ENCODE measurements at regions of chr14 and their contacts with region 1.

Region 1: GRCh38 chr14:96275177-96276112 is 19.4 kb downstream of the BDKRB1 start:
- DNase-seq: peak; percentile 51
- H3K4me3 ChIP-seq: no peak overlapping the region
- H3K27ac ChIP-seq: no peak overlapping the region
- H3K4me1 ChIP-seq: no peaks in the 10 kb centered on the region
- H3K27me3 ChIP-seq: no peaks in the 10 kb centered on the region
- CTCF ChIP-seq: peak; percentile 89 to 98
- POLR2A ChIP-seq: no peak

Region 2: DNA sequence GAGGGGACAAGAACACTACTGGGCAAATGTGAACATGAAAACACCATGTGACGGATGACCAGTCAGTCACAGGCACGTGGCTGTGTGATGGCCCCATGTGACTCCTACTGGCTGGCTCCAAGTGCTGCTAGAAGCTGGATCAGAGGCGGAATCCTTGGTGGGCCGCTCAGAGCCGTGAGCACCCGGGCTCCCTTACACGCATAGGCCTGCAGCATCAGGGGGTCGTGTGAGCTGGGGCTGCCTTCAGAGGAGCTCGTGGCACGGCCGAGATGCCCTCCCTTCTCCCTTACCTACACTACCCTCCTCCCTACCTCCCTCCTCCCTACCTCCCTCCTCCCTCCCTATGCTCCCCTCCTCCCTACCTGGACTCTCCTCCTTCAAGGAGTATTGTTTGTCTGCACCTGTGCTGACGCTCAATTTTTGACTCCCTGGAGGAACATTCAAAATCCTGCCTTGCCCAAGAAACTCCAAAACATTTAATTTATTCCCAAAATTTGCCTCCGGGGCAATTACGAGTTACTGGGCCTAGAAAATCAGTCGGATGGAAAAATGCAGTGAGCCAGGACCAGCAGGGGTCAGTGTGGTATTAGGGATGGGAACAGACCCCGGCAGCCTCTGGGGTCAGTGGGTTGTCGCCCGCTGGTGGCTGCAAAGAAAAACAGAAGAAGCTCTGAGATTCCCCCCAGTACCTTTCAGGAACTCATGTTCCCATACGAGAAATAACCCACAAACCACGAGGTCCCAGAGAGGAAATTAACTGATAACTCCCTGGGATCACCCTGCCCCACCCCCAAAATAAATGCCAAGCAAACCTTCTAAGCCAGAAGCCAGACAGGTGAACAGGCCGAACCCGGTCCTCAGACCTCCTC is 175.1 kb before region 1 on chr14:
- CTCF ChIA-PET with region 1: interaction called, 42 read pairs
- POLR2A ChIA-PET with region 1: no interaction called
- dilution Hi-C with region 1: no loop called
- intact Hi-C with region 1: loop called (anchors 1 kb)
- DNase-seq: peak; percentile 64
- H3K4me3 ChIP-seq: no peak overlapping the region
- H3K27ac ChIP-seq: no peak overlapping the region
- H3K4me1 ChIP-seq: no peaks in the 10 kb centered on the region
- H3K27me3 ChIP-seq: no peaks in the 10 kb centered on the region
- CTCF ChIP-seq: peak; percentile 81 to 83
- POLR2A ChIP-seq: no peak

Region 3: DNA sequence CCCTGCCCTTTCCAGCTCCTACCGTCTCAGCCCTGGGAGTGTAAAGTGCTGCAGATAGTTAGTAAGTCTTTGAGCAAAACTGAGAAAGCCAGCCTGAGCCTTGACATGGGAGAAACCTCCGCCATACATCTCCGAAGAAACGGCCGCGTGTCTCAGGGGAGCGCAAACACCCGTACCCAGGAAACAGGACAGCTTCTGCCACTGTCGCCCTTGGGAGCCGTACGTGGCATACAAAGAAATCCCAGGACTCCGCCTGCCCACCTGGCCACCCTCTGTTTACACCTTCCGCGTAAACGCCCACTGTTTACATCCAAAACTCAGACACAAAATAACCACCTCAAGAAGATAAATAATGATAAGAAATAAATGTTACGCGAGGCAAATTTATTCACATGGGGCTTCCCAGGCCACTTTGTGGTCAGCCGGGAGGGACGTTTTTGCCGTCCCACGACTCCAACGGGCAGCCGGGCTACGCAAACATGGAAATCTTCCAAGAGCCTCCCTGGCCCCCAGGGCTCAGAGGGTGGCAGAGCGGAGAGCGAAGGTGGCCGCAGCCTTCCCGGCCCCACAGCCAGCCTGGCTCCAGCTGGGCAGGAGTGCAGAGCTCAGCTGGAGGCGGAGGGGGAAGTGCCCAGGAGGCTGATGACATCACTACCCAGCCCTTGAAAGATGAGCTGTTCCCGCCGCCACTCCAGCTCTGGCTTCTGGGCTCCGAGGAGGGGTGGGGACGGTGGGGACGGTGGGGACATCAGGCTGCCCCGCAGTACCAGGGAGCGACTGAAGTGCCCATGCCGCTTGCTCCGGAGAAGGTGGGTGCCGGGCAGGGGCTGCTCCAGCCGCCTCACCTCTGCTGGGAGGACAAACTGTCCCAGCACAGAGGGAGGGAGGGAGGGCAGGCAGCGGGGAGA is 71.0 kb before region 1 on chr14 and contains the start of gene BDKRB2:
- CTCF ChIA-PET with region 1: no interaction called
- POLR2A ChIA-PET with region 1: no interaction called
- dilution Hi-C with region 1: no loop called
- intact Hi-C with region 1: loop called (anchors 2 kb)
- DNase-seq: peak; percentile 33
- H3K4me3 ChIP-seq: no peak within 1 kb of the TSS
- H3K27ac ChIP-seq: no peak within 1 kb of the TSS
- H3K4me1 ChIP-seq: no peaks in the 10 kb centered on the region
- H3K27me3 ChIP-seq: no peaks in the 10 kb centered on the region
- CTCF ChIP-seq: no peak
- POLR2A ChIP-seq: no peak
- total RNA-seq, gene BDKRB2: 0.39 and 0.77 TPM in 2 replicates

Region 4: GRCh38 chr14:96260341-96260821 is 15.1 kb before region 1 on chr14:
- CTCF ChIA-PET with region 1: interaction called, 18 read pairs
- POLR2A ChIA-PET with region 1: no interaction called
- dilution Hi-C with region 1: no loop called
- intact Hi-C with region 1: no loop called
- DNase-seq: no peak
- H3K4me3 ChIP-seq: no peak overlapping the region
- H3K27ac ChIP-seq: no peak overlapping the region
- H3K4me1 ChIP-seq: no peaks in the 10 kb centered on the region
- H3K27me3 ChIP-seq: no peaks in the 10 kb centered on the region
- CTCF ChIP-seq: no peak
- POLR2A ChIP-seq: no peak

Region 5: GRCh38 chr14:96285667-96286066 is 10.2 kb after region 1 on chr14:
- CTCF ChIA-PET with region 1: interaction called, 24 read pairs
- POLR2A ChIA-PET with region 1: no interaction called
- dilution Hi-C with region 1: no loop called
- intact Hi-C with region 1: no loop called
- DNase-seq: no peak
- H3K4me3 ChIP-seq: no peak overlapping the region
- H3K27ac ChIP-seq: no peak overlapping the region
- H3K4me1 ChIP-seq: no peaks in the 10 kb centered on the region
- H3K27me3 ChIP-seq: no peaks in the 10 kb centered on the region
- CTCF ChIP-seq: no peak
- POLR2A ChIP-seq: no peak

Region 6: DNA sequence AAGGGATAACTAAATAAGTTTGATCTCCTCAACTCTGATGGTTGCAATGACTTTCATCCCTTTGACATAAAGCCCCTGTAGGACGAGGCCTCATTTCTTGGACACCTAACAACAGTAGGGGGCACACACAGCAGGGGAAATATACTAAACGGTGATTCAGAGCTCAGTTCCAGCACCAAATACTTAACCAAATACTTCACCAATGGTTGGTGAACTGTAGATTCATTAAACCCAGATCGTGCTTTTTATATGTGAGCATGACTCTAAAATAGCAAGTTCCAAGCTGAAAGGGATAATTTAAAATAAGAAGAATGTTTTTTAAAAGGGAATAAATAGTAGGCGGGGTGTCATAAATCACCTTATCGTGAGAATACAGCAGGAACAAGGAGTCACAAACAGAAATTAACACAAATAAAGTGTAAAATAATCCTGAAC is 34.5 kb after region 1 on chr14:
- CTCF ChIA-PET with region 1: no interaction called
- POLR2A ChIA-PET with region 1: no interaction called
- dilution Hi-C with region 1: no loop called
- intact Hi-C with region 1: no loop called
- DNase-seq: no peak
- H3K4me3 ChIP-seq: no peak overlapping the region
- H3K27ac ChIP-seq: no peak overlapping the region
- H3K4me1 ChIP-seq: no peaks in the 10 kb centered on the region
- H3K27me3 ChIP-seq: no peaks in the 10 kb centered on the region
- CTCF ChIP-seq: no peak
- POLR2A ChIP-seq: no peak

Region 7: DNA sequence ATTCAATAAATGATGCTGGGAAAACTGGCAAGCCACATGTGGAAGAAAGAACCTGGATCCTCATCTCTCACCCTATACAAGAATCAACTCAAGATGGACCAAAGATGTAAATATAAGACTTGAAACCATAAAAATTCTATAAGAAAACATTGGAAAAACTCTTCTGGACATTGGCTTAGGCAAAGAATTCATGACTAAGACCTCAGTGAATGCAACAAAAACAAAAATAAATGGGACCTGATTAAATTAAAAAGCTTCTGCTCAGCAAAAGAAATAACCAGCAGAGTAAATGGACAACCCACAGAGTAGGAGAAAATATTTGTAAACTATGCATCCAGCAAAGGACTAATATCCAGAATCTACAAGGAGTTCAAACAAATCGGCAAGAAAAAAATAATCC is 63.1 kb after region 1 on chr14:
- CTCF ChIA-PET with region 1: no interaction called
- POLR2A ChIA-PET with region 1: no interaction called
- dilution Hi-C with region 1: no loop called
- intact Hi-C with region 1: no loop called
- DNase-seq: no peak
- H3K4me3 ChIP-seq: no peak overlapping the region
- H3K27ac ChIP-seq: no peak overlapping the region
- H3K4me1 ChIP-seq: no peaks in the 10 kb centered on the region
- H3K27me3 ChIP-seq: no peaks in the 10 kb centered on the region
- CTCF ChIP-seq: no peak
- POLR2A ChIP-seq: no peak

Region 8: GRCh38 chr14:96424109-96424989 is 148.9 kb after region 1 on chr14:
- CTCF ChIA-PET with region 1: interaction called, 5 read pairs
- POLR2A ChIA-PET with region 1: no interaction called
- dilution Hi-C with region 1: no loop called
- intact Hi-C with region 1: loop called (anchors 1 kb)
- DNase-seq: peak; percentile 82
- H3K4me3 ChIP-seq: peak overlapping the region; percentile 9 to 43 (median 25)
- H3K27ac ChIP-seq: no peak overlapping the region
- H3K4me1 ChIP-seq: peaks cover 7% of the 10 kb centered on the region
- H3K27me3 ChIP-seq: no peaks in the 10 kb centered on the region
- CTCF ChIP-seq: peak; percentile 41 to 48
- POLR2A ChIP-seq: no peak